AG04450 (cell line): ENCODE measurements at regions of chr19 and their contacts with region 1.

Region 1: DNA sequence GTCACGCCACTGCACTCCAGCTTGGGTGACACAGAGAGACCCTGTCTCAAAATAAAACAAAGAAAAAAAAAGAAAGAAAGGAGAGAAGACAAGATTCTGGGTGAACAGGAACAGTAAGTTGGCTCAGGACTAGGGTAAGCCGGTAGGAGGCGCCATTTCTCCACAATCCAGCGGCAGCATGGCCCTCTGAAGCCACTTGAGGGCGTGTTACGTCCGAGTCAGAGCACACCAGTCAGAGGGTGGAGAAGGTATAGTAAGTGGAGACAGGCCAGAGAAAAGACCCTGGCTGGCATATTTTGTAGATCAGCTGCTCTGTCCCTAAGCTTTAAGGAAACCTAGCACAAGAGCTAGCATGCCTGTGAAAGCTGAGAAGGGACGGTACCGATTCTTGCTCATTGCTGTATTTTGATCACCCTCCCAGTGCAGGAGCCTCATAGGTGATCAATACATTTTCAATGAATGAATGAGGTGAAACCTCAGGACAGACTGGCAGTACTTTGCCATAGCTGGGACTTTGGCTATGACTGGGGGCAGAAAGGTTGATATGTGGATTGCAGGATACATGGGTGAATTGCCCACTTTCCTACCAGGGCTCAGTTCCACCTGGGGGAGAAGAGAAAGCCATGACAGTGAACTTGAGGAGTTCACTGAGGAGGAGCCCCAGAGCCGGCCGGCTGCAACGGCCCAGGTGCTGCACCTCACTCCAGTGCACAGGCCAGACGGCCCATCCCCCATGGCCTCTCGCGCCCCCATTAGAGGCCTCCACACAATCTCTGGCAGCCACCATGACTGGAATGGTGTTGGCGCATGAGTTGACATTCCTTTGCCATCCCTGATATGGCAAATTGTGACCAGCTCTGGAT is 23.5 kb downstream of the POU2F2 start:
- DNase-seq: peak; percentile 78
- H3K4me3 ChIP-seq: no peak overlapping the region
- H3K27ac ChIP-seq: no peak overlapping the region
- H3K27me3 ChIP-seq: no peaks in the 10 kb centered on the region
- CTCF ChIP-seq: peak; percentile 100

Region 2: DNA sequence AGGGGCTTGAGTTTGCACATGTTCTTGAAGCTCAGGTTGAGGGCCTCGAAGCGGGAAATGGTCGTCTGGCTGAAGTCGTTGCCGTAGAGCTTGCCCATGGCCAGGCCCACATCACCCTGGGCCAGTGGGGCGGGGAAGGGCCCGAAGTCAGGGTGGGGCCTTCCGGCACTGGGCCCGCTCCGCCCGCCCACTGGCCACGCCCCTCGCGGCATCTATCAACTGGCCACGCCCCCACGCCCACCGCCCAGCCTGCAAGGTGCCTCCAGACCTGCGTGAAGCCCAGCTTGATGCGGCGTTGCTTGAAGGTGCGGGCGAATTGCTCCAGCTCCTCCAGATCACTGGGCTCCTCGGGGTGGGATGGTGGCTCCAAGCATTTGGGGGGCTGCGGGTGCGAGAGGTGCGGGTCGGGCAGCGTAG is 12.9 kb before region 1 on chr19:
- CTCF ChIA-PET with region 1: interaction called, 19 read pairs
- POLR2A ChIA-PET with region 1: no interaction called
- DNase-seq: no peak
- H3K4me3 ChIP-seq: no peak overlapping the region
- H3K27ac ChIP-seq: no peak overlapping the region
- H3K27me3 ChIP-seq: no peaks in the 10 kb centered on the region
- CTCF ChIP-seq: no peak

Region 3: GRCh38 chr19:42121656-42122069 is 12.9 kb after region 1 on chr19:
- CTCF ChIA-PET with region 1: interaction called, 16 read pairs
- POLR2A ChIA-PET with region 1: interaction called, 5 read pairs
- DNase-seq: peak; percentile 49
- H3K4me3 ChIP-seq: 0 out of 2 replicates have a peak overlapping the region, but pooled peaks have one; percentile 20
- H3K27ac ChIP-seq: peak overlapping the region; percentile 73
- H3K27me3 ChIP-seq: no peaks in the 10 kb centered on the region
- CTCF ChIP-seq: no peak

Region 4: GRCh38 chr19:42132851-42133528 is 24.2 kb after region 1 on chr19:
- CTCF ChIA-PET with region 1: interaction called, 26 read pairs
- POLR2A ChIA-PET with region 1: interaction called, 4 read pairs
- DNase-seq: no peak
- H3K4me3 ChIP-seq: peak overlapping the region; percentile 60
- H3K27ac ChIP-seq: no peak overlapping the region
- H3K27me3 ChIP-seq: peaks cover 9% of the 10 kb centered on the region
- CTCF ChIP-seq: peak; percentile 85

Region 5: DNA sequence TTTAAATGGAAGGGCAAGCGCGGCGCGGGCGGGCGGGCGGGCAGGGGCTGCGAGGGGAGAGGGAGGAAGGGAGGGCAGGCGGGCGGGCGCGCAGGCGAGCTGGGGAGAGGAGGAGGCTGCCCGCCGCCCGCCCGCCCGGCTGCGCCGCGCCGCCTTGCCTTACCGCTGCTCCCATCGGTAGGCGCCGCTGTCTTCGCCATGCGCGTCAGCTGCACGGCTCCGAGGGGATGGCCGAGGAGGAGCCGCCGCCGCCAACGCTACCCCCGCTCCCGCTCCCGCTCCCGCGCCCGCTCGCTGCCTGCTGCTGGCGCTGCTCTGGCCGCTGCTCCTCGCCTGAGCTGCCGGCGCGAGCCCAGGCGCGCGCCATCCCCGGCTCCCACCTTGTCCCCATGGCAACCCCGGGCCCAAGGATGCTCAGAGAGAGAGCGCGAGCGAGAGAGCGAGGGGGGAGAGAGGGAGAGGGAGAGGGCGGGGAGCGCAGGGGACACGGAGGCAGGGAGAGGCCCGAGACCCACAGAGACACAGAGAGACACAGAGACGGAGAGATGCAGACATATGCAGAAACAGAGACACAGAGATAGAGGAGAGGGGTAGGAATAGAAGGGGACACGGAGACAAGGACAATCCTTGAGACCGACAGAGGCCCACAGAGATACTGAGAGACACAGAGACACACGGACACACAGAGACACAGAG is 68.4 kb after region 1 on chr19:
- CTCF ChIA-PET with region 1: interaction called, 38 read pairs
- POLR2A ChIA-PET with region 1: no interaction called
- DNase-seq: peak; percentile 32
- H3K4me3 ChIP-seq: peak overlapping the region; percentile 60
- H3K27ac ChIP-seq: no peak overlapping the region
- H3K27me3 ChIP-seq: peaks cover 67% of the 10 kb centered on the region
- CTCF ChIP-seq: peak; percentile 40

Region 6: DNA sequence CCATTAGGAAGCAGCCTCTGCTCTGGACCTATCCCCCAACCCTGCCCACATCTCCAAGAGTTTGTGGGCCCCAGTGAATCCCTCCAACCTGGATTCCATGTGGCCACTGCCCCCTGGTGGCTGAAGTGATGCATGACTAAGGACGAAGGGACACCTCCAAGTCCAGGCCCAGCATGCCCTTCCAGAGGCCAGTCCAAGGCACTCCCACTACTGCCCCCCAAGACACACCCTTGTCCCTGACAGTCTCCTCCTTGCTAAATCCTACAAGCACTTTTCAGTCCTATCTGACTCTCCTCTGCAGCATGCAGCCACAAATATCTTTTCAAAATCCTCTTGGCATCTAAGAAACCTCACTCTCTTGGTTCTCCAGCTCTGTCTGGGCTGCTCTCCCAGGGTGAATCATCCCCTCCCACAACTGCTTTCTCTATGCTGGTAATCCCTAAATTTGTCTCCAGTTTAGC is 75.7 kb after region 1 on chr19:
- CTCF ChIA-PET with region 1: interaction called, 38 read pairs
- POLR2A ChIA-PET with region 1: no interaction called
- DNase-seq: peak; percentile 44
- H3K4me3 ChIP-seq: no peak overlapping the region
- H3K27ac ChIP-seq: no peak overlapping the region
- H3K27me3 ChIP-seq: peaks cover 23% of the 10 kb centered on the region
- CTCF ChIP-seq: peak; percentile 92

Region 7: DNA sequence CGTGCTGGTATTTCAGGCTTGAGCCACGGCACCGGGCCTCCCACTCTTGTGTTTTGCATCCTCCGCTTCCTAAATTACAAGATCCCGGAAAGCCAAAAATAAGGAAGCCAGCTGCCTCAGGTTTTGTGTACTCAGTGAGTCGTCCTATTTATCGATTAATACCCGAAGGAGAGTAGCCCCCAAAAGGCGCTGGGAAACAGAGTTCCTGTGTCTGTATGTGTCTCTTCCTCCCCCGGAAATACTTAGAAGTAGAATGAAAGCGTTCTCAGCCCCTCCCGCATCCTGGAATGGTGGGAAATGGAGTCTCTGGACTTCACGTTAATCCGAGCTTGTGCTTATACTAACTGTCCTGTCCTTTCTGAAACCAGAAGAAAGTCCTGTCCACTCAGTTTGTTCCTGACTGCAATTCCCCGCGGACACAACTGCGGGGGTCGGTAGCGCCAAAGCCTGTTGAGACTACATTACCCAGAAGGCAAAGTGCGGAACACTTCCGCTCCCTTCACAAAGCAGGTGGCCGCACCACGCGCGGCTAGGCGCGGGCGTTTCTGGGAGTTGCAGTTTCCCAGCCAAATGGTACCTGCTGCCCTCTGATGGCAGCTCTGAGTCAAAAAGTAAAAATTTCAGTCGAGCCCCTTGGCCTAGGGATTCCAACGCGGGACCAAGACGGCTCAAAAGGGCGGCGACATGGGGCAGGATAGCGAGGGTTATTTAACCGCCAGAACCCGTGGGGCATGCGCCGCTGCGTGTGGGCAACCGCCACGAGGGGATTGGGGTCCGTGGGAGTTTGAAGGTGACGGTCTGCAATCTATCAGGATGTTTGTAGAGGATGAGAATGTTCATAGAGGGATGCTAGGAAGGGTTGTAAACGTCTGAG is 135.8 kb after region 1 on chr19:
- CTCF ChIA-PET with region 1: interaction called, 24 read pairs
- POLR2A ChIA-PET with region 1: interaction called, 4 read pairs
- DNase-seq: peak; percentile 85
- H3K4me3 ChIP-seq: peak overlapping the region; percentile 79
- H3K27ac ChIP-seq: peak overlapping the region; percentile 65
- H3K27me3 ChIP-seq: no peaks in the 10 kb centered on the region
- CTCF ChIP-seq: peak; percentile 71